ENCODE measurements at regions of chr1 and their contacts with region 1.

Region 1: GRCh38 chr1:240149484-240150094 is 57.9 kb downstream of the FMN2 start:
- DNase-seq: no peak
- H3K4me3 ChIP-seq: no peak overlapping the region
- CTCF ChIP-seq: peak; percentile 32

Region 2: DNA sequence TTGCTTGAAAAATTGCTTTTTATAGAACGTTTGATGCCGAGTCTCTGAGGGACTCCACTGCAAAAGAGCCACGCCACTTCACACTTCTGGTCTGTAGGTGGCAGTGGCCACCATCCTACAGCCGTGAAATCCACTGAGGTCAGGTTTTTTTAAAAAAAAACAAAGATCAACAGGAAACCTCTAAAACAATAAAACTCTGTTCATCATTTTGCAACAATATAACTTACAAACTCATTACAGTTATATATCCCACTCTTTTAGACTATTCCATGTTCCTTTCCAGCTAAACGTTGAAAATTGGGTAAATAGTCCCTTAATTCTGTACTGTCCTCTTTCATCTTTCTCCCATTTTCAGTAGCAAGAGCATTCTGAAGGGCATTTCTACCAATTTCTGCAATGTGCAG is 122.5 kb before region 1 on chr1:
- CTCF ChIA-PET with region 1: interaction called, 157 read pairs
- POLR2A ChIA-PET with region 1: no interaction called
- DNase-seq: no peak
- H3K4me3 ChIP-seq: no peak overlapping the region
- CTCF ChIP-seq: peak; percentile 80

Region 3: GRCh38 chr1:240100371-240100934 is 49.1 kb before region 1 on chr1:
- CTCF ChIA-PET with region 1: interaction called, 23 read pairs
- POLR2A ChIA-PET with region 1: interaction called, 3 read pairs
- DNase-seq: peak; percentile 42
- H3K4me3 ChIP-seq: no peak overlapping the region
- CTCF ChIP-seq: no peak

Region 4: GRCh38 chr1:240116831-240117769 is 32.5 kb before region 1 on chr1:
- CTCF ChIA-PET with region 1: interaction called, 28 read pairs
- POLR2A ChIA-PET with region 1: no interaction called
- DNase-seq: no peak
- H3K4me3 ChIP-seq: no peak overlapping the region
- CTCF ChIP-seq: no peak

Region 5: GRCh38 chr1:240136402-240136801 is 13.2 kb before region 1 on chr1:
- CTCF ChIA-PET with region 1: interaction called, 90 read pairs
- POLR2A ChIA-PET with region 1: no interaction called
- DNase-seq: no peak
- H3K4me3 ChIP-seq: no peak overlapping the region
- CTCF ChIP-seq: no peak

Region 6: GRCh38 chr1:240189386-240189989 is 39.9 kb after region 1 on chr1:
- CTCF ChIA-PET with region 1: interaction called, 18 read pairs
- POLR2A ChIA-PET with region 1: no interaction called
- DNase-seq: no peak
- H3K4me3 ChIP-seq: no peak overlapping the region
- CTCF ChIP-seq: peak; percentile 63

Region 7: DNA sequence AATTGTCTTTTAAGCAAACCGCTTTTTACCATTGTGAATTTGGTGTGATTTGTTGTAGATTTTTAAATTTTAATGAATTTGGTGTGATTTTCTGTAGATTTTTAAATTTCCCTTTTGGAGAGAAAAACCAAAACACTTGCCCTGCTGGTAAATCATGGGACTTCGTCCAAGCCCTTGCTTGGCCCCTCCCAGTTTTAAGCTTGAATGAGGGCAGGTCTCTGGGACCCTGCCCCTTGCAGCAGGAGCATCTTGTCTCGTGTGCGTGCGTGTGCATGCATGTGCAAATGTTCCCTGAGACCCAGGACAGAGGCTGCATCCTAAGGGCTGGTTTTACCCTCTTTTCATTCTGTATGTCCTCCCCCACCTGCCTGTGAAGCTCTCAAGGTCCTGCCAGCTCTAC is 213.7 kb after region 1 on chr1:
- CTCF ChIA-PET with region 1: no interaction called
- POLR2A ChIA-PET with region 1: no interaction called
- DNase-seq: no peak
- H3K4me3 ChIP-seq: no peak overlapping the region
- CTCF ChIP-seq: no peak

Measured in AG04449 (cell line).